Activated B cell treated with CpG ODN at 0.5 μM for 24 hours (primary cell): ENCODE measurements at regions of chr12 and their contacts with region 1.

Region 1: DNA sequence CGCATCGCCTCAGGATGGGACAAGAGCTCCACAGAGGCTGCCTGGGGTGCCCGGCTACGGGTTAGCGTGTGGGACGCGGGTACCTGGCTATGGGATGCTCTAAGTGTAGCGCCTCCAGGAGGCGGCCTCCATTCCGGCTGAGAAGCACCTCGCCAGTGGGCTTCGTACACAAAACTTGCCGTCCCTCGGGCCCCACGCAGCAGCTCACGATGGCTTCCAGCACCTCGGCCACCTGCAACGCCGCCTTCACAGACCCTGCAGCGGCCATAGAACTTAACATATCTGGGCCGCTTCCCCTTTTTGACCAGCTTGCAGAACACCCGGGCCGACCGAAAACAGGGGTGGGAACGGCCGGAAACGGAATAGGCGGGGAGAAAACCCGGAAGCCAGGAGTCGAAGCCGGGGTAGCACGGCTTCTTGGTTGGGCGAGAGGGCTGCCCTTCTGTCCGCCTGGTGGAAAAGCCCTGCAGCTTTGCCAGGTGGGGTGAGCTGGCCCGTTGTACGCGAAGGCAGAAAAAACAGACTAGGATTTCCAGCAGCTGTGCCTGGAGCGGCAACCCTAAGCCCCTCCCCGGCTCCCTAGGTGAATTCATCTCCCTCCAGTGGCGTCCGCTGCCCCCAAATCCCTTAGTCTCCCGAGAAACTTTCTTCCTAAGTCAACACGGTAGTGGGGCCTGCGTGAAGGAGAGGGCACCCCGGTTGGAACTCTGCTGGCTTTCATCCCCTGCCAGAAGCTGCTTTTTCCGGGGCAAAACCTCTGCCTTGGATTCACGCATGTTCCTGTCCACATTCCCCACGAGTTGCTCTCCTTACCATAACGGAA is at the start of gene BBS10:
- DNase-seq: peak; percentile 81
- ATAC-seq: peak; percentile 98
- H3K4me3 Mint-ChIP-seq: peak within 1 kb of the TSS; percentile 95
- H3K27ac Mint-ChIP-seq: peak within 1 kb of the TSS; percentile 93
- H3K4me1 Mint-ChIP-seq: peaks cover 35% of the 10 kb centered on the region
- H3K27me3 Mint-ChIP-seq: no peaks in the 10 kb centered on the region
- CTCF ChIP-seq: no peak
- total RNA-seq, gene BBS10: 7.9 and 8.0 TPM in 2 replicates

Region 2: DNA sequence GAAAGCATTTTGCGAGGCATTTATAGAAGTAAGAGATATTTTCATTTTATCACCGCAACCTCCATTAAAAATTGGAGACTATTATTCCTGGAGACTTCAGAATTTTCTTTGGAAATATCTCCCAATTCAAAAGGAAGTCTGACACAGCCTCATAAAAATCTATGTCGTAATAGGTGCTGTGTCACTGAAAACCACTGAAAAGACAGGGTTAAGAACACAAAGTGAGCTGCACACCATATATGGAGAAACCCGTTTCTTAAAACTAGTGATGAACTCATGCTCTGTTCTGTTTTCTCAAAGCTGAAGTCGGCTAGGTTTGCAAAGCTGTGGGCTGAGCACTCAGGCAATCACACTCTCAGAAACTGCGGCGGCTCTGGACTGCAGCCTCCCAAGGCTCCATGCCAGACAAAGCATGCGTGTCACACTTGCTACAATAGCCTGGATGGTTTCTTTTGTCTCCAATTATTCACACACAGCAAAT is 867.8 kb before region 1 on chr12 and contains the start of gene GLIPR1:
- CTCF ChIA-PET with region 1: no interaction called
- POLR2A ChIA-PET with region 1: interaction called, 11 read pairs
- intact Hi-C with region 1: loop called (anchors 10 kb)
- DNase-seq: peak; percentile 40
- ATAC-seq: peak; percentile 79
- H3K4me3 Mint-ChIP-seq: peak within 1 kb of the TSS; percentile 96
- H3K27ac Mint-ChIP-seq: peak within 1 kb of the TSS; percentile 97
- H3K4me1 Mint-ChIP-seq: peaks cover 96% of the 10 kb centered on the region
- H3K27me3 Mint-ChIP-seq: no peaks in the 10 kb centered on the region
- CTCF ChIP-seq: no peak
- total RNA-seq, gene GLIPR1: 44.7 and 45.4 TPM in 2 replicates

Region 3: DNA sequence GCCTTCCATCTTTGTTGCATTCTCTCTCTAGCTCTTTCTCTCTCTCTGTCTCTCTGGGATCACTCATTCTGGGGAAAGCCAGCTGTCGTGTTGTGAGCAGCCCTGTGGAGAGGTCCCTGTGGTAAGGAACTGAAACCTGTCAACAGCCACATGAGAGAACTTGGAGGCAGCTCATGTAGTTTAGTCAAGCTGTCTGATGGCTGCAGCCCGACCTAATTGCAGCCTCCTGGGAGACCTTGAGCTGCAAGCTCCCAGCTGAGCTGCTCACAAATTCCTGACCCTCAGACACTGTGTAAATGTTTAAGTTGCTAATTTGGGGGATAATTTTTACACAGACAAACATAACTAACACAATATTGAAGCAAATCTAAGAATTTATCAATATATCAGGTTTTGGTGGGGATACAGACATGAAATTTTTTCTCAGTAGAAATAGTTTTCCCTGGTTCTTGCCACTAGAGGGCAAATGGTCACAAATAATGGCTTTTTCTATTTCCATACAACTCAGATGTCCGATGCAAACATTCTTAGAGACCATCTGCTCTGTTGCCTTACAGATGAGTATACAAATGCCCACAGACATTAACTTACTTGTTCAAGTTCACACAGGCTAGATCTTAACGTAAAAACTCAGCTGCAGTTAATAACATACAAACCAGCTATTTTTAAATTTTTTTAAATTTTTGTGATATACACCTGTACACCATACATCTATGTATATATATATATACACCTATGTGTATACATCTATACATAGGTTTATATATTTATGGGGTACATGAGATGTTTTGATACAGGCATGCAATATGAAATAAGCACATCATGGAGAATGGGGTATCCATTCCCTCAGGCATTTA is 821.4 kb before region 1 on chr12:
- CTCF ChIA-PET with region 1: interaction called, 8 read pairs
- POLR2A ChIA-PET with region 1: no interaction called
- intact Hi-C with region 1: loop called (anchors 5 kb)
- DNase-seq: no peak
- ATAC-seq: peak; percentile 74
- H3K4me3 Mint-ChIP-seq: no peak overlapping the region
- H3K27ac Mint-ChIP-seq: no peak overlapping the region
- H3K4me1 Mint-ChIP-seq: peaks cover 6% of the 10 kb centered on the region
- H3K27me3 Mint-ChIP-seq: peaks cover 31% of the 10 kb centered on the region
- CTCF ChIP-seq: no peak

Region 4: DNA sequence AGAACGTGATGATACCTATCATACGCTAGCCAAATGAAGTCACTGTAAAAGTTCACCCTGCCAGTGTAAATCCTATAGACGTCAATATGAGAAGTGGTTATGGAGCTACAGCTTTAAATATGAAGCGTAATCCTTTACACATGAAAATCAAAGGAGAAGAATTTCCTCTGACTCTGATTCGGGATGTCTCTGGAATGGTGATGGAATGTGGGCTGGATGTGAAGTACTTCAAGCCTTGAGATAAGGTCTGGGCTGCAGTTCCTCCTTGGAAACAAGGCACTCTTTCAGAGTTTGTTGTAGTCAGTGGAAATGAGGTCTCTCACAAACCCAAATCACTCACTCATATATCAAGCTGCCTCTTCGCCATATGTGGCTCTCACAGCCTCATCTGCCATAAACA is 210.7 kb before region 1 on chr12:
- CTCF ChIA-PET with region 1: no interaction called
- POLR2A ChIA-PET with region 1: no interaction called
- intact Hi-C with region 1: no loop called
- DNase-seq: no peak
- ATAC-seq: no peak
- H3K4me3 Mint-ChIP-seq: no peak overlapping the region
- H3K27ac Mint-ChIP-seq: no peak overlapping the region
- H3K4me1 Mint-ChIP-seq: no peaks in the 10 kb centered on the region
- H3K27me3 Mint-ChIP-seq: no peaks in the 10 kb centered on the region
- CTCF ChIP-seq: no peak

Region 5: DNA sequence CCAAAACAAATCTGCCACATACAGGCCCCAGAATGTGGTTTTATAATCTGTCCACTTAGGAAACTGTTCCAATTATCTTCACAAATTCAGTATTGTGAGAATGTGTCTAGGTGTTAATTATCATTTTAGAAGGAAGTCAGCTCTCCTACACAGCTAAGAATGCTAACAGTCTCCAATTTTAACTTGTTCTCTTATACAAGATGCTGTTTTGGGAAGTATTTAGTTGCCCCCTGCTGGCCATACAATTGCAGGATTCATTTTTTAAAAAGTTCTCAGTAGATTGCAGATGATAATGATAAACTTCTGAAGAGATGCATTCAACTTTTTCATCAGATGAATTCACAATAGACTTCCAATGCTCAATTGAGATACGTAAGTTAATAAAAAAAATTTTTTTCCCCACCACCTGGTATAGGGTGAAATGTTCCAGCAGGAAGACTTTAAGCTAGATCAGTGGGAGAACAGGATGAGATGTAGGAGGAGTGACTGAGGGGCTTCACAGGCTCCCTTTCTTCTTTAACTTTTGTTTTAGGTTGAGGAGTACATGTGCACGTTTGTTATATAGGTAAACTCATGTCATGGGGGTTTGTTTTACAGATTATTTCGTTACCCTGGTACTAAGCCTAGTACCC is 238.6 kb after region 1 on chr12:
- CTCF ChIA-PET with region 1: interaction called, 15 read pairs
- POLR2A ChIA-PET with region 1: interaction called, 3 read pairs
- intact Hi-C with region 1: no loop called
- DNase-seq: no peak
- ATAC-seq: peak; percentile 58
- H3K4me3 Mint-ChIP-seq: no peak overlapping the region
- H3K27ac Mint-ChIP-seq: no peak overlapping the region
- H3K4me1 Mint-ChIP-seq: peaks cover 9% of the 10 kb centered on the region
- H3K27me3 Mint-ChIP-seq: no peaks in the 10 kb centered on the region
- CTCF ChIP-seq: peak; percentile 82